ENCODE measurements at regions of chr5 and their contacts with region 1.

Region 1: GRCh38 chr5:34898258-34898895 is 16.9 kb downstream of the RAD1 start:
- DNase-seq: peak; percentile 77
- H3K4me3 ChIP-seq: no peak overlapping the region
- H3K27ac ChIP-seq: no peak overlapping the region
- H3K4me1 ChIP-seq: no peaks in the 10 kb centered on the region
- H3K27me3 ChIP-seq: no peaks in the 10 kb centered on the region
- CTCF ChIP-seq: peak; percentile 85

Region 2: GRCh38 chr5:34015120-34015822 is 883.1 kb before region 1 on chr5:
- CTCF ChIA-PET with region 1: no interaction called
- POLR2A ChIA-PET with region 1: no interaction called
- intact Hi-C with region 1: loop called (anchors 5 kb)
- DNase-seq: no peak
- H3K4me3 ChIP-seq: no peak overlapping the region
- H3K27ac ChIP-seq: no peak overlapping the region
- H3K4me1 ChIP-seq: no peaks in the 10 kb centered on the region
- H3K27me3 ChIP-seq: no peaks in the 10 kb centered on the region
- CTCF ChIP-seq: no peak

Region 3: GRCh38 chr5:34486160-34486848 is 412.1 kb before region 1 on chr5:
- CTCF ChIA-PET with region 1: interaction called, 7 read pairs
- POLR2A ChIA-PET with region 1: no interaction called
- intact Hi-C with region 1: loop called (anchors 1 kb)
- DNase-seq: peak; percentile 87
- H3K4me3 ChIP-seq: no peak overlapping the region
- H3K27ac ChIP-seq: no peak overlapping the region
- H3K4me1 ChIP-seq: peaks cover 7% of the 10 kb centered on the region
- H3K27me3 ChIP-seq: no peaks in the 10 kb centered on the region
- CTCF ChIP-seq: peak; percentile 94

Region 4: DNA sequence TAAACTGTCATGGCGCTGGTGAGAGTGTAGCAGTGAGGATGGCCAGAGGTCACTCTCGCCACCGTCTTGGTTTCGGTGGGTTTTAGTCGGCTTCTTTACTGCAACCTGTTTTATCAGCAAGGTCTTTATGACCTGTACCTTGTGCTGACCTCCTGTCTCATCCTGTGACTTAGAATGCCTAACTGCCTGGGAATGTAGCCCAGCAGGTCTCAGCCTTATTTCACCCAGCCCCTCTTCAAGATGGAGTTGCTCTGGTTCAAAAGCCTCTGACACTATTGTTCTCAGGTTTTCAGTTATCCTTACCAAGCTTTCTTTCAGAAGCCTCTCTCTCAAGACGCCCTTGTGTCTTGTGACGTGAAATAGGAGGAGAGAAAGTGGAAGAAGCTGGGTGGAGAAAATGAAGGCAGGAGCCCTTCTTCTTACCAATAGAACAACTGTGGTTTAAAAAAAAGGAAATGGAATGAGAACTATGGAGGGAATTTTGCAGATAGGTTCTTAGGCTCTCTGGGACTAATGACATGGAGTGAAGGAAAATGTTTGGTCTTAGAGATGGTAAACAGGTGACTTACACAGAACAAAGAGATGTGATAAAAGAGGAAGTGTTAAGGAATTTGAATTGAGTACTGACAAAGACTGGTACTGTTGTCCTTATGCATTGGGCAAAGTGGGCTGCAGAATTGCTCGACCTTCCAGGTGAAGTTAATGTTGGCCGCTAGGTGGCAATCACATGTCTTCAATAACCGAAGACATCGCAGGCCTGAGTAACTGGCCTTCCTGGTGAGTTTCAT is 375.6 kb before region 1 on chr5:
- CTCF ChIA-PET with region 1: interaction called, 4 read pairs
- POLR2A ChIA-PET with region 1: no interaction called
- intact Hi-C with region 1: loop called (anchors 1 kb)
- DNase-seq: peak; percentile 78
- H3K4me3 ChIP-seq: no peak overlapping the region
- H3K27ac ChIP-seq: no peak overlapping the region
- H3K4me1 ChIP-seq: no peaks in the 10 kb centered on the region
- H3K27me3 ChIP-seq: no peaks in the 10 kb centered on the region
- CTCF ChIP-seq: peak; percentile 84

Region 5: DNA sequence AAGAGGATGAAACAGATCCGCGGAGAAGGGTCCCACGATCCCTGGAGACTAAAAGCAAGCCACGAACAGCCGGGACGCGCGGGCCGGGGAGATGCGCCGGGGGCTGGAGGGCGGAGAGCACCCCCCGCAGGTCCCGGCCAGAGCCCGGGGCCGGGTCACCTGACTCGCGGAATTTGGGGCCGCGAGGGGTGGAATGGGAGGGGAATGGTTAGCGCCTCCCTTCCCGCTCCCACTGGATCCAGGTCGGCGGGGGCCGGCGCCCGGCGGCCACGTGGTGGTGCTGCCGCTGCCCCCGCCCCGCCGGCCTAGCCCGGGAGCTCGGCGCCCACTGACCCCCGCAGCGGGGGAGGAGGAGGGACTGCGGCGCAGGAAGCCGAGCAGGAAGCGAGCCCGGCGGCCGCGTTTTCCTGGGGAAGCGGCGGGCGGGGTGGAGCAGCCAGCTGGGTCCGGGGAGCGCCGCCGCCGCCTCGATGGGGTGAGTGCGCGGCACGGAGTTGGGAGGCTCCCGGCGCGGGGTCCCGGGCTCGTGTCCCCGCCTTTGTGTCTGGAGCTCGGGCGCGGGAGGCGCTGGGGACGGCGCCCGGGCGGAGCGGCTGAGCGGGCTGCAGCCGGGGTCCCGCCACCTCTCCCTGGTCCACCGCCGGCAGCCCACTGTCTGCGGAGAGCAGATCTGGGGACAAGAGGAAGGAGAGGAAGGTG is 242.2 kb before region 1 on chr5 and contains the start of gene RAI14:
- CTCF ChIA-PET with region 1: no interaction called
- POLR2A ChIA-PET with region 1: no interaction called
- intact Hi-C with region 1: loop called (anchors 5 kb)
- DNase-seq: peak; percentile 62
- H3K4me3 ChIP-seq: peak within 1 kb of the TSS; percentile 77
- H3K27ac ChIP-seq: peak within 1 kb of the TSS; percentile 55
- H3K4me1 ChIP-seq: peaks cover 7% of the 10 kb centered on the region
- H3K27me3 ChIP-seq: no peaks in the 10 kb centered on the region
- CTCF ChIP-seq: no peak
- total RNA-seq, gene RAI14: 23.6 and 40.0 TPM in 2 replicates